HepG2 (cell line): ENCODE measurements at regions of chr18 and their contacts with region 1.

Region 1: DNA sequence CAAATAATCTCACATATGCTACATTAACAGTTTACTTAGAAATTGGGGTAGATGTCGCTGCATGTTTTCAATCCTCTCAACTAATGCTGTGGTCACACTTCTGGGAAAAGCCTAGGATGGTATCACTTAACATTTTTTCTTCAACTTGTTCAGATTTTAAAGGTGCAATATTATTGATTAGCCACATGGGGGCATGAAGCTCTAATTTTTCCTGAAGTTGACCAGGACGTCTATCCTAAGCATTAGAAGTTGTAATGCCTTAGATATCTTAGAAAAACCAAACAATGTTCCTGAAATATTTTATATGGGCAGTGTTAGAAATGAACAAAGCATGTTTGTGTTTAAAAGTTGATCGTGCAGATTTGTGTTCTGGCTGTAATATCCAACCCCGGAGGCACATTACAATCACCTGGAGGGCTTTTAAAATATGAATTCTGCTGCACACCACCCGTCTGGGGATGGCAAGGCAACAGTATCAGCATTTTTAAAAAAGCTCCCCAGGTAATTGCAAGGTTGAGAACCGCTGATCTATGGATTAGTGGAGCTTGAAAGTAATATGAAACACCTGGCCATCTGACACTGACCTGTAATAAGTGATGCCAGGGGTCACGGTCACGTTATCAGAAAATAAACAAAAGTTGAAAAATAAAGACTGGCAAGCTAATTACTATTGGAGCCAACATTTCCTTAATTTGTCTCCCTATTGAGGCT is 100.5 kb upstream of the LMAN1 start:
- DNase-seq: peak; percentile 16
- ATAC-seq: peak; percentile 33; the same call in 2 of the 3 replicates
- H3K4me3 ChIP-seq: no peak overlapping the region
- H3K27ac ChIP-seq: no peak overlapping the region
- H3K4me1 ChIP-seq: peaks cover 18% of the 10 kb centered on the region
- H3K27me3 ChIP-seq: peaks cover 2 to 53% of the 10 kb centered on the region in 2 experiments; a peak in 3 of 5 replicates
- CTCF ChIP-seq: peak; percentile 66
- EP300 ChIP-seq: no peak
- POLR2A ChIP-seq: no peak
- RAD21 ChIP-seq: 0 out of 2 replicates have a peak, but pooled peaks have one; percentile 16

Region 2: DNA sequence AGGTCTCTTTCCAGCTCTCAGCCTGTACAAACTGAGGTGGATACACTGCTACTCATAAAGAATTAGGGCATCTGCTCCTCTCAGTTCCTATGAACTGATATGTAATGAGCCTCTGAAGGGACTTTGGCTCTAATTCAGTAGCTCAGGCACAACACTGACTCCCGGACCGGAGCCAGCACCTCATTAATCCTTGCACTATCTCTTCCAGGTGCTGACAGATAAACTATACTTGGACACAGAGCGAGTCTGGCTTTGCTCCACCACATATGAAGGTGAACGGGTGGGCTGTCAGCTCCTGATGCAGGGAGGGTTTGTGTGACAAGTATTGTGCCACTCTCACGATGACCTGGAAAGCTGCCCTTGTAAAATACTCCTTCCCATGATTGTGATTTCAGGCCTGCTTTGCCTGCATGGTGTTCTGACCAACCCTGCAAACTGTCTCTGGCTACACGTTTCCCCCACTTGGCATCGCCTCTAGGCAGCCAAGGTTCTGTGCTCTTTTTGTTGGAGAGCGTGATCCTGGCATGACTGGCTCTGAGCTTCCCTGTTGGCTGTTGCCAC is 11.1 kb after region 1 on chr18:
- CTCF ChIA-PET with region 1: no interaction called
- POLR2A ChIA-PET with region 1: no interaction called
- in situ Hi-C with region 1: no loop called
- intact Hi-C with region 1: no loop called
- DNase-seq: no peak
- ATAC-seq: no peak
- H3K4me3 ChIP-seq: no peak overlapping the region
- H3K27ac ChIP-seq: no peak overlapping the region
- H3K4me1 ChIP-seq: no peaks in the 10 kb centered on the region
- H3K27me3 ChIP-seq: peaks cover 2 to 14% of the 10 kb centered on the region in 2 experiments; a peak in 2 of 5 replicates
- CTCF ChIP-seq: no peak
- EP300 ChIP-seq: no peak
- POLR2A ChIP-seq: no peak
- RAD21 ChIP-seq: no peak

Region 3: DNA sequence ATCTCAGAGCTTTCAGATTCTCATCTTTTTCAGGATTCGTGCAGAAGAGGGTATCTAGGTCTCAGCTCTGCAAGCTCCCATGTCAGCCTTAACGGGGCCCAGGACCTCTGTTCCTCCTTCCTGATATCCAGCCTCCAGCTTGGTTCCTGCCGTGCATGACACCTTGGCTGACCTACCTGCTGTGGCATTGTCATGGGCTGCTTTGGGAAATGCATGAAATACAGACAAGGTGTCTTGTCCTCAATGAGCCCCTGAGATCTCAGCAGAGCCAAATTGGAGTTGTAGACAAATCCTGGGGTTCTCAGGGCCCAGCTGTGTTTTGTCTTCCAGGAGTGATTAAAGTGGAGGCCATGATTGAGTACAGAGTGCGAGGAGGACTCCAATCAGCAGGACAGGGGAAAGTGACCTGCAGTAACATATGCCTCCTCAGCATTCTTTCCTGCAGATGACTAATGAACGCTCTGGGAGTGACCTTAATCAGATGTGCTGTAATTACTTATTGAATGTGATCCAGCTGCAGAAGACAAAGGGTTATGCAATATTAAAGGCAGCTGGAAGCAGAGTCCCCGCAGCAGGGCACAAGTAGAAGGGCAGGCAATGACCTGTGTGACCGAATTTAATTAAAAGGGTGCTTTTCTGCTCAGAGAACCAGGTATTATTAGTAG is 96.6 kb after region 1 on chr18:
- CTCF ChIA-PET with region 1: no interaction called
- POLR2A ChIA-PET with region 1: no interaction called
- in situ Hi-C with region 1: no loop called
- intact Hi-C with region 1: no loop called
- DNase-seq: no peak
- ATAC-seq: no peak
- H3K4me3 ChIP-seq: no peak overlapping the region
- H3K27ac ChIP-seq: no peak overlapping the region
- H3K4me1 ChIP-seq: no peaks in the 10 kb centered on the region
- H3K27me3 ChIP-seq: peaks cover 1 to 2% of the 10 kb centered on the region in 2 experiments; a peak in 1 of 5 replicates
- CTCF ChIP-seq: no peak
- EP300 ChIP-seq: no peak
- POLR2A ChIP-seq: no peak
- RAD21 ChIP-seq: no peak

Region 4: GRCh38 chr18:59612381-59612780 is 152.9 kb after region 1 on chr18:
- CTCF ChIA-PET with region 1: no interaction called
- POLR2A ChIA-PET with region 1: no interaction called
- in situ Hi-C with region 1: no loop called
- intact Hi-C with region 1: loop called (anchors 10 kb)
- DNase-seq: no peak
- ATAC-seq: no peak
- H3K4me3 ChIP-seq: no peak overlapping the region
- H3K27ac ChIP-seq: no peak overlapping the region
- H3K4me1 ChIP-seq: no peaks in the 10 kb centered on the region
- H3K27me3 ChIP-seq: peaks cover 0 to 9% of the 10 kb centered on the region in 2 experiments; a peak in 2 of 5 replicates
- CTCF ChIP-seq: no peak
- EP300 ChIP-seq: no peak
- POLR2A ChIP-seq: no peak
- RAD21 ChIP-seq: no peak

Region 5: GRCh38 chr18:59631583-59632181 is 172.2 kb after region 1 on chr18:
- CTCF ChIA-PET with region 1: no interaction called
- POLR2A ChIA-PET with region 1: no interaction called
- in situ Hi-C with region 1: loop called (anchors 25 kb)
- intact Hi-C with region 1: no loop called
- DNase-seq: peak; percentile 1
- ATAC-seq: no peak
- H3K4me3 ChIP-seq: no peak overlapping the region
- H3K27ac ChIP-seq: no peak overlapping the region
- H3K4me1 ChIP-seq: no peaks in the 10 kb centered on the region
- H3K27me3 ChIP-seq: peaks cover 0 to 1% of the 10 kb centered on the region in 2 experiments; a peak in 2 of 5 replicates
- CTCF ChIP-seq: peak; percentile 52
- EP300 ChIP-seq: no peak
- POLR2A ChIP-seq: no peak
- RAD21 ChIP-seq: no peak